ENCODE measurements at regions of chr19 and their contacts with region 1.

Region 1: DNA sequence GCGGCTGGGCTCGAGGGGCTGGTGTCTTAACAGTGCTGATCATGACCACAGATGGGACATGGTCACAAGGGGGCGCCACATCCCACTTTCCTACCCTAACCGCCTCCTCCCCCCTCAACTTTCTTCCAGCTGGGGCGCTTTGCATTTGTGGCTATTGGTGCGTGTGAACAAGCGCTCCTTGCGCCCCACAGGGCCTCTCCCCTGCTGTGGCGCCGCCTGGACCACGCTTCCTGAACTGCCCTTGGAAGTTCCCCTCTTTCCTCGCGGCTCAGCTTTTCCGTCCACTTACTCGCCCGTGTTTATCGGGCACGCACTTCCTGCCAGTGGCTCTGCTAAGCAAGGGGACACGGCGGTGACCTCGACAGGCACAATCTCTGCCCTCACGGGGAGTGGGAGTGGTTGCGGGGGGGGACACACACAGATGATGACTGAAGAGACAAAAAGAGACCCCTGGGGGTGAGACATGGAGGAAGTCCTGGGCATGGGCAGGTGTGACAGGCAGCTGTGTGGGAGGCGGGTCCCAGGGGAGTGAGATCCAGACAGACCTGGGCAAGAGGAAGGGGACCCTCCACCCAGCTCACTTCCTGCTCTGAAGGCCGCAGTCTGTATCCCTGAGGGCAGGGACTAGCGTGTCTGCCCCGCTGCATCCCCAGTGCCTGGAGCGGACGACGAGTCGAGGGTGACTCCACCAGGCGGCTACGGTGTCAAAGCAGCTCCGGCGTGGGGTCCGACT is 40.3 kb downstream of the ZNF787 start:
- DNase-seq: peak; percentile 91
- ATAC-seq: peak; percentile 81
- H3K4me3 Mint-ChIP-seq: peak overlapping the region; percentile 85
- H3K27ac Mint-ChIP-seq: no peak overlapping the region
- H3K4me1 Mint-ChIP-seq: peaks cover 23% of the 10 kb centered on the region
- H3K27me3 Mint-ChIP-seq: peaks cover 15% of the 10 kb centered on the region
- CTCF ChIP-seq: peak; percentile 64

Region 2: GRCh38 chr19:56066152-56067023 is 14.4 kb before region 1 on chr19:
- CTCF ChIA-PET with region 1: interaction called, 32 read pairs
- POLR2A ChIA-PET with region 1: interaction called, 5 read pairs
- DNase-seq: peak; percentile 86
- ATAC-seq: peak; percentile 90
- H3K4me3 Mint-ChIP-seq: peak overlapping the region; percentile 59
- H3K27ac Mint-ChIP-seq: no peak overlapping the region
- H3K4me1 Mint-ChIP-seq: peaks cover 3% of the 10 kb centered on the region; the same call in 1 of the 2 replicates
- H3K27me3 Mint-ChIP-seq: peaks cover 24% of the 10 kb centered on the region
- CTCF ChIP-seq: peak; percentile 90

Region 3: DNA sequence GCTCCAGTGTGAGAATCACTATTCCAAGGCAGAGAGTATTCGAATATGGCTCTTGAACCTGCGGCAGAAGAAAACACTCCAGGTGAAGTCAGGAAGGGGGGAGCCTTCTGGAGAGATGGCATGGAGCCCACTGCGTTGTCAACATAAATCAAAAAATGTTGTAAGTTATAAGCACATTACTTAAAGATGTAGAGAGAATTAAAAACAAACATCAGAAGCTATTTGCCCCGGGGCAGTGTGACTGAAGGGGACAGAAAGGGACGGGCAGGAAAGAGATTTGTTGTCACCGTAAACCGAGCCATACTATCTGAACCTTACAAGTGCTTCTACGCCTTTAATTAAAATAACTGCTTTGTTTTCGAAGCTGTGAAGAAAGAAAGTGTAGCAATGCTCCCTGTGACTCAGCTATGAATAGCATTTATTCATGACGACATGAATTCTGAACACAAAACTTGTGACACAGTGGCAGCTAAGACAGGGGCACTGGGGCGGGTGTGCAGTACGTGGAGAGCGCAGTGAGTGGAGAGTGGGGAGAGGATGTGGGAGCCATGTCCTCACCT is 10.2 kb after region 1 on chr19:
- CTCF ChIA-PET with region 1: interaction called, 19 read pairs
- POLR2A ChIA-PET with region 1: no interaction called
- DNase-seq: no peak
- ATAC-seq: no peak
- H3K4me3 Mint-ChIP-seq: no peak overlapping the region
- H3K27ac Mint-ChIP-seq: peak overlapping the region; percentile 73; the same call in 1 of the 2 replicates
- H3K4me1 Mint-ChIP-seq: peaks cover 17% of the 10 kb centered on the region
- H3K27me3 Mint-ChIP-seq: no peaks in the 10 kb centered on the region
- CTCF ChIP-seq: no peak

Region 4: DNA sequence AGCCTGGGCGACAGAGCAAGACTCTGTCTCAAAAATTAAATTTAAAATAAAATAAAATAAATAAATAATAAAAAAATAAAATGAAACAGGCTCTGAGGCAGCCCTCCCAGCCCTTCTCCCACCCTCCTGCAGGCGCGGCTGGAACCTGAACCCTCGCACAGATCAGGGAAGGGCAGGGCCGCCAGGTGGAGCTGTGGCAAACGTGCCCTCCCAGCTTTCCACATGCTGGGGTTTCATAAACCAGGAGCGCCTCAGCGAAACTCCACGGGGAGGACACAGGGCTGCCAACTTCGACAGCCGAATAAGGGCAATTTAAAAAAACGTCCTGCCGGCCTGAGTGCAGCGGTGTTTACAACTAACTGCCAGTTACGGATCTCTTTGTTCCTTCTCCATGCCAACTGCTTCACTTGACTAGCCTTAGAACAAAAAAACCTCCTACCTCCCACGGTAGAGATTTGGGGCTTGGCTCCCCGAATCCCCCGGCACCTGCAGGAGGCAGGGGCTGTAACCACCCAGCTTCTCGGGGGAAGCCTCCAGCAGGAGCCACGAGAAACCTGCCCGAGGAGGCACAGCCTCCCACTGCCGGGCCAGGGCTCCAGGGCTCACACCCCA is 24.4 kb after region 1 on chr19:
- CTCF ChIA-PET with region 1: interaction called, 17 read pairs
- POLR2A ChIA-PET with region 1: interaction called, 5 read pairs
- DNase-seq: peak; percentile 87
- ATAC-seq: peak; percentile 86
- H3K4me3 Mint-ChIP-seq: 0 out of 2 replicates have a peak overlapping the region, but pooled peaks have one; percentile 12
- H3K27ac Mint-ChIP-seq: peak overlapping the region; percentile 91
- H3K4me1 Mint-ChIP-seq: peaks cover 42% of the 10 kb centered on the region
- H3K27me3 Mint-ChIP-seq: no peaks in the 10 kb centered on the region
- CTCF ChIP-seq: peak; percentile 60

Region 5: GRCh38 chr19:56170261-56170660 is 89.4 kb after region 1 on chr19:
- CTCF ChIA-PET with region 1: interaction called, 22 read pairs
- POLR2A ChIA-PET with region 1: no interaction called
- DNase-seq: no peak
- ATAC-seq: no peak
- H3K4me3 Mint-ChIP-seq: no peak overlapping the region
- H3K27ac Mint-ChIP-seq: no peak overlapping the region
- H3K4me1 Mint-ChIP-seq: peaks cover under 1% of the 10 kb centered on the region; the same call in 1 of the 2 replicates
- H3K27me3 Mint-ChIP-seq: peaks cover 5% of the 10 kb centered on the region; the same call in 1 of the 2 replicates
- CTCF ChIP-seq: no peak

Region 6: GRCh38 chr19:56333505-56333904 is 252.7 kb after region 1 on chr19:
- CTCF ChIA-PET with region 1: interaction called, 26 read pairs
- POLR2A ChIA-PET with region 1: no interaction called
- DNase-seq: peak; percentile 37
- ATAC-seq: peak; percentile 73
- H3K4me3 Mint-ChIP-seq: no peak overlapping the region
- H3K27ac Mint-ChIP-seq: no peak overlapping the region
- H3K4me1 Mint-ChIP-seq: no peaks in the 10 kb centered on the region
- H3K27me3 Mint-ChIP-seq: peaks cover 14% of the 10 kb centered on the region
- CTCF ChIP-seq: peak; percentile 41; the same call in 1 of the 2 replicates

Measured in WTC11 (cell line).